Caco-2 (cell line): ENCODE measurements at regions of chr21 and their contacts with region 1.

Region 1: GRCh38 chr21:45011911-45012660 is 62.3 kb upstream of the ADARB1 start:
- DNase-seq: peak; percentile 94 to 97
- H3K4me3 ChIP-seq: peak overlapping the region; percentile 4
- H3K4me3 Mint-ChIP-seq: peak overlapping the region; percentile 67
- H3K27ac Mint-ChIP-seq: peak overlapping the region; percentile 82
- H3K4me1 ChIP-seq: peaks cover 61% of the 10 kb centered on the region
- H3K4me1 Mint-ChIP-seq: peaks cover 34% of the 10 kb centered on the region
- H3K27me3 ChIP-seq: no peaks in the 10 kb centered on the region
- H3K27me3 Mint-ChIP-seq: no peaks in the 10 kb centered on the region
- CTCF ChIP-seq: peak in 1 of 2 experiments; percentile 62

Region 2: GRCh38 chr21:44949779-44950198 is 62.3 kb before region 1 on chr21:
- CTCF ChIA-PET with region 1: interaction called, 21 read pairs
- POLR2A ChIA-PET with region 1: interaction called, 3 read pairs
- intact Hi-C with region 1: loop called (anchors 5 kb)
- DNase-seq: peak; percentile 87 to 90
- H3K4me3 ChIP-seq: no peak overlapping the region
- H3K4me3 Mint-ChIP-seq: no peak overlapping the region
- H3K27ac Mint-ChIP-seq: no peak overlapping the region
- H3K4me1 ChIP-seq: peaks cover 5% of the 10 kb centered on the region; the same call in 1 of the 2 replicates
- H3K4me1 Mint-ChIP-seq: no peaks in the 10 kb centered on the region
- H3K27me3 ChIP-seq: no peaks in the 10 kb centered on the region
- H3K27me3 Mint-ChIP-seq: no peaks in the 10 kb centered on the region
- CTCF ChIP-seq: peak; percentile 82 to 91

Region 3: DNA sequence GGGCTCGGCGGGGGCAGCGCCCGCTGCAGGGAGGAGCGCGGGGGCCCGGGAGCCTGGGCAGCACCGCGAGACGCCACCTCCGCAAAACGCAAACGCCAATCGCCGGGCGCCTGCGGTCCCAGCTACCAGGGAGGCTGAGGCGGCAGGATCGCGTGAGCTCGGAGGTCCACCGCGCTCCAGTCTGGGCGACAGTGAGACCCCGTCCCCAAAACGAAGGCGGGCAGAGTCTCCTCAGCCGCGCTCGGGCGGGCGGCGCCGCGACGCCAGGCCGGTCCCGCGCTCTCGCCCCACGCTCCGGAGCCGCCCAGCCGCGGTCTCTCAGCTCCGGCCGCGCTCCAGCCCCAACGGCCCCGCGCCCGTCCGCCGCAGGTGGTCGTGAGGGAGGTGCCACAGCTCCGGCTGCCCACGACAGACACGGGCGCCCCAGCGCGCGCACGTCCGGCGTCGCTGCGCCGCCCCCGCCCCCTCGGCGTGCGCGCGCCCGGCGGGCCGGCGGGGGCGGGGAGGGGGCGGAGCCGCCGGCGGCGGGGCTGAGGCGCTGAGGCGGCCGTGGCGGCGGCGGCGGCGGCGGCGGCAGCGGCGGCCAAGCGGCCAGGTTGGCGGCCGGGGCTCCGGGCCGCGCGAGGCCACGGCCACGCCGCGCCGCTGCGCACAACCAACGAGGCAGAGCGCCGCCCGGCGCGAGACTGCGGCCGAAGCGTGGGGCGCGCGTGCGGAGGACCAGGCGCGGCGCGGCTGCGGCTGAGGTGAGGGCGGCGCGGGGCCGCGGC is 62.1 kb after region 1 on chr21 and contains the start of gene ADARB1:
- CTCF ChIA-PET with region 1: interaction called, 18 read pairs
- POLR2A ChIA-PET with region 1: interaction called, 30 read pairs
- intact Hi-C with region 1: loop called (anchors 2 kb)
- DNase-seq: peak; percentile 89 to 90
- H3K4me3 ChIP-seq: peak within 1 kb of the TSS; percentile 80
- H3K4me3 Mint-ChIP-seq: peak within 1 kb of the TSS; percentile 88
- H3K27ac Mint-ChIP-seq: peak within 1 kb of the TSS; percentile 100
- H3K4me1 ChIP-seq: peaks cover 13% of the 10 kb centered on the region
- H3K4me1 Mint-ChIP-seq: peaks cover 10% of the 10 kb centered on the region
- H3K27me3 ChIP-seq: no peaks in the 10 kb centered on the region
- H3K27me3 Mint-ChIP-seq: peaks cover 3% of the 10 kb centered on the region
- CTCF ChIP-seq: no peak
- total RNA-seq, gene ADARB1: 25.4 and 25.8 TPM in 2 replicates

Region 4: DNA sequence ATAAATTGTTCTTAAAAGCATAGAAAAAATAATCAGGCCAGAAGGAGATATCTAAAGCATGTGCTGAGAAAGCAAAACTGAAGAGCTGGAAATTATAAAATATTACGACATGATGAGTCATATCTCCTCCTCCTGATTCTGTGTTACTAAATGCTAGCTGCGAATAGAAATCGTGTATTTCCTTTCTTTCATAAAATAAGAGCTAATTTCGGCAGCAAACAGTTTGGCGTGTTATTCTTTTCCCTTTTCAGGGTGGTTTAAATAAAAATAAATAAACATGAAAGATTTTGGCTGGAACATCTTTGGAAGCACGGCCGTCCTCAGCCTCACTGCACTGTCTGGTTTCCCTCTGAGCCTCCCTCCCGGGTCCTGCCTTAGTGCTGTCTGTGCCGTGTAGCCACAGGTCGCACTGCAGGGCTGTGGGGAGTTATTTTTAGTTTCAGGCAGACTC is 118.3 kb after region 1 on chr21:
- CTCF ChIA-PET with region 1: interaction called, 19 read pairs
- POLR2A ChIA-PET with region 1: interaction called, 3 read pairs
- intact Hi-C with region 1: no loop called
- DNase-seq: no peak
- H3K4me3 ChIP-seq: no peak overlapping the region
- H3K4me3 Mint-ChIP-seq: no peak overlapping the region
- H3K27ac Mint-ChIP-seq: no peak overlapping the region
- H3K4me1 ChIP-seq: no peaks in the 10 kb centered on the region
- H3K4me1 Mint-ChIP-seq: no peaks in the 10 kb centered on the region
- H3K27me3 ChIP-seq: no peaks in the 10 kb centered on the region
- H3K27me3 Mint-ChIP-seq: no peaks in the 10 kb centered on the region
- CTCF ChIP-seq: no peak